H1 (cell line): ENCODE measurements at regions of chr15 and their contacts with region 1.

Region 1: GRCh38 chr15:79450648-79451047 is 18.5 kb downstream of the MINAR1 start:
- DNase-seq: no peak
- H3K4me3 ChIP-seq: no peak overlapping the region
- H3K27ac ChIP-seq: no peak overlapping the region
- H3K4me1 ChIP-seq: peaks cover 0 to 10% (median 6%) of the 10 kb centered on the region in 4 experiments; a peak in 5 of 7 replicates
- H3K27me3 ChIP-seq: no peaks in the 10 kb centered on the region; a peak in 1 of 7 replicates
- CTCF ChIP-seq: peak in 2 of 3 experiments; percentile 37 to 47; a peak in 2 of 4 replicates
- EP300 ChIP-seq: no peak
- POLR2A ChIP-seq: no peak
- RAD21 ChIP-seq: peak; percentile 61

Region 2: DNA sequence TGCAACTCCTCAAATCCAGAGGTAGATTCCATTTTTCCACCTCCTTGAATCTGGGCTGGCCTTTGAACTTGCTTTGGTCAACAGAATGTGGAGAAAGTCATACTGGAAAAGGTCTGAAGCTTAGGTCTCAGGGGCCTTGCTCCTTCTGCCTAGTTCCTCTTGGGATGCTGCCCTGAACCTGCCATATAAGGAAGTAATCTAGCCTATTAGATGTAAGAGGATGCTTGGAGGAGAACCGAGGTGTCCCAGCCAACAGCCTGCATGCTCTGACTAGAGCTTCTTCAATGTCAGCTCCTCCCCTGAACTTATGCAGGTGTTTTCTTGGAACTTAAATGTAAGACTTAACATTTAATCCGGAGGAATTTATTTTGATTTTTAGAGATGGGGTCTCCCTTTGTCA is 141.8 kb before region 1 on chr15:
- CTCF ChIA-PET with region 1: no interaction called
- POLR2A ChIA-PET with region 1: no interaction called
- DNase-seq: no peak
- H3K4me3 ChIP-seq: no peak overlapping the region
- H3K27ac ChIP-seq: no peak overlapping the region
- H3K4me1 ChIP-seq: peaks cover 0 to 11% (median 5%) of the 10 kb centered on the region in 4 experiments; a peak in 4 of 7 replicates
- H3K27me3 ChIP-seq: peaks cover 0 to 9% (median 3%) of the 10 kb centered on the region in 4 experiments; a peak in 4 of 7 replicates
- CTCF ChIP-seq: no peak
- EP300 ChIP-seq: no peak
- POLR2A ChIP-seq: no peak
- RAD21 ChIP-seq: no peak

Region 3: DNA sequence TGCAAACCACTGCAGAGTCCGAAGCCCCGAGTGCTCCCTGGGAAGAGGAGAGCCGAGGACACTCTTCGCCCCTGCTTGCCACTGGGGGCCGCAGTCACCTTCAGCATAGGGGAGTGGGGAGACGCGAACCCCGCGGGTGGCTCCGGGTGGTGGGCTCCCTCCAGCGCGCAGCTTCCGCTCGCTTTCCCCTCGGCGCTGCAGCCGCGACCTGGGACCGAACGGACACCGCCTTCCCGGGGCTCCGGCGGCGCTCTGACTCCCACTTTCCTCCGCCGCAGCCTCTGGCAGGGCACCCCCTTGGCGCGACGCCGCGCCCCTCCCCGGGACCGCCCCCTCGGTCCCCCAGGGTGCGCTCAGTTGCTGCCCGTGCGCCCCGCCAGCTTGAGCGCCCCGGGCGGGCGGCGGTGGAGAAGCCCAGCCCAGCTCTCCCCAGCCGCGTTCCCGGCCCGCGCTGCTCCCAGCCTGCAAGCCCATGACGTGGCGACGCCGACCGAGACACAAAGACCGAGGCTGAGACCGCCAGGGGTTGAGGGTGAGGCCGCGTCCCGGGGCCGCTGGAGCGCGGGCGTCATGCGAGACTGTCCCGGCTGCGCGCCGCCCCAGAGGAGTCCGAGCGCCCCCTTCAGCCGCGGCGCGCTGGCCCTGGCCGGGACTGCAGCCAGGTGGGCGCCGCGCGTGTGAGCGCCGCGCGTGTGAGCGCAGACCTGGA is 18.9 kb before region 1 on chr15 and contains the start of gene MINAR1:
- CTCF ChIA-PET with region 1: interaction called, 28 read pairs
- POLR2A ChIA-PET with region 1: interaction called, 3 read pairs
- DNase-seq: peak in 1 of 2 experiments; percentile 61
- H3K4me3 ChIP-seq: peak within 1 kb of the TSS; percentile 29 to 68 (median 46)
- H3K27ac ChIP-seq: no peak within 1 kb of the TSS
- H3K4me1 ChIP-seq: peaks cover 0 to 11% (median 6%) of the 10 kb centered on the region in 4 experiments; a peak in 6 of 7 replicates
- H3K27me3 ChIP-seq: peaks cover 34 to 57% (median 49%) of the 10 kb centered on the region in 4 experiments
- CTCF ChIP-seq: peak; percentile 6 to 40 (median 33); a peak in 3 of 4 replicates
- EP300 ChIP-seq: no peak
- POLR2A ChIP-seq: no peak
- RAD21 ChIP-seq: peak; percentile 19 to 48; a peak in 3 of 4 replicates
- total RNA-seq, gene MINAR1: 0.59 and 0.67 TPM in 2 replicates

Region 4: GRCh38 chr15:79463043-79463780 is 12.6 kb after region 1 on chr15:
- CTCF ChIA-PET with region 1: interaction called, 26 read pairs
- POLR2A ChIA-PET with region 1: interaction called, 4 read pairs
- DNase-seq: no peak
- H3K4me3 ChIP-seq: no peak overlapping the region
- H3K27ac ChIP-seq: no peak overlapping the region
- H3K4me1 ChIP-seq: no peaks in the 10 kb centered on the region
- H3K27me3 ChIP-seq: no peaks in the 10 kb centered on the region
- CTCF ChIP-seq: peak in 1 of 3 experiments; percentile 14; a peak in 1 of 4 replicates
- EP300 ChIP-seq: no peak
- POLR2A ChIP-seq: no peak
- RAD21 ChIP-seq: no peak; a peak in 1 of 4 replicates

Region 5: GRCh38 chr15:79472446-79472845 is 21.8 kb after region 1 on chr15:
- CTCF ChIA-PET with region 1: interaction called, 17 read pairs
- POLR2A ChIA-PET with region 1: no interaction called
- DNase-seq: no peak
- H3K4me3 ChIP-seq: no peak overlapping the region
- H3K27ac ChIP-seq: no peak overlapping the region
- H3K4me1 ChIP-seq: no peaks in the 10 kb centered on the region
- H3K27me3 ChIP-seq: no peaks in the 10 kb centered on the region
- CTCF ChIP-seq: no peak
- EP300 ChIP-seq: no peak
- POLR2A ChIP-seq: no peak
- RAD21 ChIP-seq: no peak